Natural killer cell (primary cell): ENCODE measurements at regions of chr3 and their contacts with region 1.

Region 1: GRCh38 chr3:71875461-71875947 is 90.6 kb upstream of the PROK2 start:
- DNase-seq: peak; percentile 58 to 85
- ATAC-seq: peak; percentile 85 to 98 (median 98)
- H3K4me3 ChIP-seq: no peak overlapping the region
- H3K4me3 Mint-ChIP-seq: no peak overlapping the region
- H3K27ac ChIP-seq: no peak overlapping the region
- H3K27ac Mint-ChIP-seq: no peak overlapping the region
- H3K4me1 ChIP-seq: no peaks in the 10 kb centered on the region
- H3K4me1 Mint-ChIP-seq: no peaks in the 10 kb centered on the region
- H3K27me3 ChIP-seq: no peaks in the 10 kb centered on the region
- H3K27me3 Mint-ChIP-seq: no peaks in the 10 kb centered on the region
- CTCF ChIP-seq: peak; percentile 66

Region 2: GRCh38 chr3:72818092-72818773 is 942.7 kb after region 1 on chr3:
- intact Hi-C with region 1: loop called (anchors 1 kb)
- DNase-seq: peak in 1 of 2 donors; percentile 34
- ATAC-seq: no peak
- H3K4me3 ChIP-seq: no peak overlapping the region
- H3K4me3 Mint-ChIP-seq: no peak overlapping the region
- H3K27ac ChIP-seq: no peak overlapping the region
- H3K27ac Mint-ChIP-seq: peak overlapping the region in 1 of 2 donors; percentile 35
- H3K4me1 ChIP-seq: no peaks in the 10 kb centered on the region
- H3K4me1 Mint-ChIP-seq: peaks cover 5 to 6% of the 10 kb centered on the region in 2 donors
- H3K27me3 ChIP-seq: no peaks in the 10 kb centered on the region
- H3K27me3 Mint-ChIP-seq: no peaks in the 10 kb centered on the region
- CTCF ChIP-seq: no peak

Region 3: GRCh38 chr3:73086071-73086494 is 1210.6 kb after region 1 on chr3:
- intact Hi-C with region 1: loop called (anchors 2 kb)
- DNase-seq: peak; percentile 23 to 74
- ATAC-seq: peak; percentile 62 to 78 (median 77)
- H3K4me3 ChIP-seq: no peak overlapping the region
- H3K4me3 Mint-ChIP-seq: no peak overlapping the region
- H3K27ac ChIP-seq: no peak overlapping the region
- H3K27ac Mint-ChIP-seq: peak overlapping the region in 1 of 2 donors; percentile 25
- H3K4me1 ChIP-seq: no peaks in the 10 kb centered on the region
- H3K4me1 Mint-ChIP-seq: peaks cover 6% of the 10 kb centered on the region in 2 donors
- H3K27me3 ChIP-seq: no peaks in the 10 kb centered on the region
- H3K27me3 Mint-ChIP-seq: peaks cover 0 to 5% of the 10 kb centered on the region in 2 donors
- CTCF ChIP-seq: peak; percentile 90